GM12878 (cell line): ENCODE measurements at regions of chr5 and their contacts with region 1.

Region 1: DNA sequence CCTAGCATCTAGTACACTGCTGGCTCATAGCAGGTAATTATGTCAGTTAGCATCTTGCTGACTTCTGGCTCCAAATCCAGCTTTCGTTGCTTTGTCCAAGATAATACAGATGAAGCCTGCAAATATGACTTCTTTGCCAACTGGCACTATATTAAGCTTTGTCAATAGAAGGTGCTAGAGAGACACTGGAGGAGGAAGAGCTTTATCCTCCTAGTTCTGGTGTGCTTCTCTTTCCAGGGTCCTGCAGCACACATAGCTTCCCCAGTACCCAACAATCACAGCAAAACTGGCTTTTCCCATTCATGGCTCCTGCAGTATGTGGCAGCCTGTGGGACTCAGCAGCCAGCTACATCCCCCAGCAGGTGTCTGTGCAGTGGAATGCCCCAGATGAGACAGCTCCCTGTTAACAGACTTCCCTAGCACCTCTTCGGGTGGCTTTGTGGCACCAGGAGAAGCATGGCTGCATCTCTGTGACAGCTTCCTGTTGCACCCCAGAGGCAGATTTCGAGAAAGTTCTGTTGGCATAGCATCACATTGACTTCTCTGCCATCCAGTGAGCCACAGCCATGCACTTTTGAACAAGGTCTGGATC is 147.8 kb downstream of the OXCT1 start:
- DNase-seq: no peak
- ATAC-seq: peak; percentile 59
- H3K4me3 ChIP-seq: no peak overlapping the region
- H3K27ac ChIP-seq: no peak overlapping the region
- H3K4me1 ChIP-seq: no peaks in the 10 kb centered on the region
- H3K27me3 ChIP-seq: no peaks in the 10 kb centered on the region
- CTCF ChIP-seq: peak; percentile 25 to 47 (median 31); a peak in 4 of 6 replicates
- EP300 ChIP-seq: no peak
- POLR2A ChIP-seq: no peak
- RAD21 ChIP-seq: peak; percentile 37; the same call in 1 of the 2 replicates

Region 2: GRCh38 chr5:41735213-41735612 is 12.8 kb after region 1 on chr5:
- CTCF ChIA-PET with region 1: interaction called, 7 read pairs
- POLR2A ChIA-PET with region 1: no interaction called
- RAD21 ChIA-PET with region 1: no interaction called
- SMC1A ChIA-PET with region 1: interaction called, 12 read pairs
- in situ Hi-C with region 1: no loop called
- intact Hi-C with region 1: no loop called
- DNase-seq: no peak
- ATAC-seq: peak; percentile 61
- H3K4me3 ChIP-seq: no peak overlapping the region
- H3K27ac ChIP-seq: no peak overlapping the region
- H3K4me1 ChIP-seq: no peaks in the 10 kb centered on the region
- H3K27me3 ChIP-seq: no peaks in the 10 kb centered on the region
- CTCF ChIP-seq: no peak
- EP300 ChIP-seq: no peak
- POLR2A ChIP-seq: no peak
- RAD21 ChIP-seq: no peak